Ovary (tissue), 10 donors: ENCODE measurements at regions of chr7 and their contacts with region 1.

Region 1: GRCh38 chr7:142612237-142612881 is 136.9 kb upstream of the PRSS1 start:
- DNase-seq: no peak
- H3K4me3 ChIP-seq: no peak overlapping the region
- H3K27ac ChIP-seq: no peak overlapping the region
- H3K4me1 ChIP-seq: no peaks in the 10 kb centered on the region
- H3K27me3 ChIP-seq: no peaks in the 10 kb centered on the region
- CTCF ChIP-seq: no peak
- EP300 ChIP-seq: no peak
- POLR2A ChIP-seq: no peak

Region 2: GRCh38 chr7:142956951-142957623 is 344.7 kb after region 1 on chr7:
- intact Hi-C with region 1: no loop called
- DNase-seq: no peak
- H3K4me3 ChIP-seq: no peak overlapping the region
- H3K27ac ChIP-seq: no peak overlapping the region
- H3K4me1 ChIP-seq: no peaks in the 10 kb centered on the region
- H3K27me3 ChIP-seq: no peaks in the 10 kb centered on the region
- CTCF ChIP-seq: no peak
- EP300 ChIP-seq: no peak
- POLR2A ChIP-seq: no peak

Region 3: GRCh38 chr7:144454256-144455039 is 1842.1 kb after region 1 on chr7:
- intact Hi-C with region 1: loop called in 1 of 4 experiments (anchors 5 kb)
- DNase-seq: no peak
- H3K4me3 ChIP-seq: no peak overlapping the region
- H3K27ac ChIP-seq: no peak overlapping the region
- H3K4me1 ChIP-seq: no peaks in the 10 kb centered on the region
- H3K27me3 ChIP-seq: no peaks in the 10 kb centered on the region
- CTCF ChIP-seq: no peak
- EP300 ChIP-seq: no peak
- POLR2A ChIP-seq: no peak